Transverse colon (tissue), 4 donors: ENCODE measurements at regions of chr6 and their contacts with region 1.

Region 1: DNA sequence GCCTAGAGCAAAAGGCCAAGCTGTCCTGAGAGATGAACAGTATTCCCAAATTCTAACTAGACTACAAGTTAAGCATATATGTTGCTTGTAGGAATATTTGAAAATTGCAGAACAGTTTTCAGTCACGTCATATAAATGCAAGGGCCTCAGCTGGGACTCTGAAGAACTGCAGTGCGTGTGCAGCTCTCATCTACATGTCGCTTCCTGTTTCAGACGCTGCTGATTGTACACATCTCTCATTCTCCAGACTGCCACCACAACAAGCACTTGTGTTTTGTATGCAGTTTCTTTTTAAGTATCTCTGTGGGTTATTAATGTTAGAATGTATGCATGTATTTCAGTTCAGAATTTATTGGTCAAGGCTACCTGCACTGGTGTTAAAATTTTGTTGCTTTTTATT is 119.7 kb downstream of the MAP3K4 start:
- DNase-seq: no peak
- H3K4me3 ChIP-seq: no peak overlapping the region
- H3K27ac ChIP-seq: no peak overlapping the region
- H3K4me1 ChIP-seq: no peaks in the 10 kb centered on the region
- H3K27me3 ChIP-seq: no peaks in the 10 kb centered on the region
- CTCF ChIP-seq: no peak
- EP300 ChIP-seq: no peak
- POLR2A ChIP-seq: no peak

Region 2: GRCh38 chr6:160812097-160812496 is 299.2 kb before region 1 on chr6:
- in situ Hi-C with region 1: no loop called
- intact Hi-C with region 1: no loop called
- DNase-seq: no peak
- H3K4me3 ChIP-seq: no peak overlapping the region
- H3K27ac ChIP-seq: no peak overlapping the region
- H3K4me1 ChIP-seq: no peaks in the 10 kb centered on the region
- H3K27me3 ChIP-seq: no peaks in the 10 kb centered on the region
- CTCF ChIP-seq: no peak
- EP300 ChIP-seq: no peak
- POLR2A ChIP-seq: no peak

Region 3: DNA sequence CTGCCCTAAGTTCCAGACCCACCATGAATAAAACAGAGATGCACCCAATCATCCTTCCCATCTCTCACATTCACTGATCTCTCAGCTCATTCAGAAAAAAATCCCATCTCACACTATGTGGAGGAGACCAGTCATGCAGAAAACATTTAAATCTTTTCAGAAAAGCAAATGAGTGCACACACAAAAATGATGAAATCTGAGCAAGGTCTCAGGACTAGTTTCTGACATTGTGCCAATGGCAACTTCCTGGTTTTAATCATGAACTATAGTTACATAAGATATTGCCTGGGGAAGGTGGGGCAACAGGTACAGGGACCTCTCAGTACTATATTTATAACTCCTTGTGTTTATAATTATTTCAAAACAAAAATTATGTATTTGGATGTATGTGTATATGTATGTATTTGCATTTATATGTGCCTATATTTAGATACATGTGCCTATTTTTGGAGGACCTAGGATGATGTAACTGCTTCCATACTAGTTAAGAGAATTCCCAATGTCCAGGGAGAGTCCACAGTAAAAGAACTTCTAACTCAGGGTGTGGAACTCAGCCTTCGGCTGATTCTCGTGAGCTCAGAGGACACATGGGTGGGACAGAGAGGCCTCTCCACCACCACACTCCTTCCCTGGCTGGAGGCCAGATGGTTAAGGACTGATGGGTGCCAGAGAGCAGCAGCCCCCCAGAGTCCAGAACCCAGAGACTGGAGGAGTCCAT is 191.4 kb before region 1 on chr6:
- in situ Hi-C with region 1: no loop called
- intact Hi-C with region 1: loop called (anchors 10 kb)
- DNase-seq: no peak
- H3K4me3 ChIP-seq: no peak overlapping the region
- H3K27ac ChIP-seq: no peak overlapping the region
- H3K4me1 ChIP-seq: no peaks in the 10 kb centered on the region
- H3K27me3 ChIP-seq: no peaks in the 10 kb centered on the region
- CTCF ChIP-seq: no peak
- EP300 ChIP-seq: no peak
- POLR2A ChIP-seq: no peak

Region 4: DNA sequence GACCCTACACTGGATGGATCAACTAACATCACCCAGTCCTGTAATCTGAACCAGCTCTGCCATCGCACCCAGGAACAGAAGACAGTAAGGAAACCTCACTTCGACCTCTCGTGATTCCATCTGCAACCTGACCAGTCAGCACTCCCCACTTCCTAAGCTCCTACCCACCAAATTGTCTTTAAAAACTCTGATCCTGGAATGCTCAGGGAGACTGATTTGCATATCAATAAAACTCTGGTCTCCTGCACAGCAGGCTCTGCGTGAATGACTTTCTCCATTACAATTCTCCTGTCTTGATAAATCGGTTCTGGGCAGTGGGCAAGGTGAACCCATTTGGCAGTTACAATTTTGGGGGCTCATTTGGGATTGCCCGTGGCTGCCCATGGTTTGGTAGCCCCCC is 180.9 kb after region 1 on chr6:
- in situ Hi-C with region 1: no loop called
- intact Hi-C with region 1: no loop called
- DNase-seq: no peak
- H3K4me3 ChIP-seq: no peak overlapping the region
- H3K27ac ChIP-seq: no peak overlapping the region
- H3K4me1 ChIP-seq: peaks cover 0 to 3% (median 0%) of the 10 kb centered on the region in 4 donors
- H3K27me3 ChIP-seq: no peaks in the 10 kb centered on the region
- CTCF ChIP-seq: no peak
- EP300 ChIP-seq: no peak
- POLR2A ChIP-seq: no peak